ENCODE measurements at regions of chr5 and their contacts with region 1.

Region 1: GRCh38 chr5:42583322-42583721 is 160.1 kb downstream of the GHR start:
- DNase-seq: peak; percentile 38
- ATAC-seq: peak; percentile 48; the same call in 1 of the 2 replicates
- H3K4me3 ChIP-seq: no peak overlapping the region
- H3K27ac ChIP-seq: no peak overlapping the region
- H3K4me1 ChIP-seq: no peaks in the 10 kb centered on the region
- H3K27me3 ChIP-seq: no peaks in the 10 kb centered on the region
- CTCF ChIP-seq: peak; percentile 67
- POLR2A ChIP-seq: no peak
- RAD21 ChIP-seq: peak; percentile 49

Region 2: GRCh38 chr5:42423285-42424165 is 159.8 kb before region 1 on chr5 and contains the start of gene GHR:
- CTCF ChIA-PET with region 1: interaction called, 4 read pairs
- POLR2A ChIA-PET with region 1: no interaction called
- dilution Hi-C with region 1: no loop called
- in situ Hi-C with region 1: no loop called
- intact Hi-C with region 1: loop called (anchors 1 kb)
- DNase-seq: peak; percentile 88
- ATAC-seq: peak; percentile 98
- H3K4me3 ChIP-seq: peak within 1 kb of the TSS; percentile 63
- H3K27ac ChIP-seq: peak within 1 kb of the TSS; percentile 47
- H3K4me1 ChIP-seq: no peaks in the 10 kb centered on the region
- H3K27me3 ChIP-seq: no peaks in the 10 kb centered on the region
- CTCF ChIP-seq: peak; percentile 84
- POLR2A ChIP-seq: no peak
- RAD21 ChIP-seq: peak; percentile 57
- total RNA-seq, gene GHR: 1.1 TPM in 2 replicates

Region 3: GRCh38 chr5:42454216-42454995 is 128.9 kb before region 1 on chr5:
- CTCF ChIA-PET with region 1: no interaction called
- POLR2A ChIA-PET with region 1: no interaction called
- dilution Hi-C with region 1: no loop called
- in situ Hi-C with region 1: no loop called
- intact Hi-C with region 1: no loop called
- DNase-seq: no peak
- ATAC-seq: no peak
- H3K4me3 ChIP-seq: no peak overlapping the region
- H3K27ac ChIP-seq: no peak overlapping the region
- H3K4me1 ChIP-seq: no peaks in the 10 kb centered on the region
- H3K27me3 ChIP-seq: no peaks in the 10 kb centered on the region
- CTCF ChIP-seq: no peak
- POLR2A ChIP-seq: no peak
- RAD21 ChIP-seq: no peak

Region 4: GRCh38 chr5:43007246-43007910 is 424.1 kb after region 1 on chr5:
- CTCF ChIA-PET with region 1: no interaction called
- POLR2A ChIA-PET with region 1: no interaction called
- dilution Hi-C with region 1: no loop called
- in situ Hi-C with region 1: no loop called
- intact Hi-C with region 1: no loop called
- DNase-seq: peak; percentile 91
- ATAC-seq: peak; percentile 51
- H3K4me3 ChIP-seq: peak overlapping the region; percentile 49
- H3K27ac ChIP-seq: peak overlapping the region; percentile 90
- H3K4me1 ChIP-seq: peaks cover 19% of the 10 kb centered on the region
- H3K27me3 ChIP-seq: no peaks in the 10 kb centered on the region
- CTCF ChIP-seq: no peak
- POLR2A ChIP-seq: 0 out of 2 replicates have a peak, but pooled peaks have one; percentile 26
- RAD21 ChIP-seq: no peak

Measured in IMR-90 (cell line).